ENCODE measurements at regions of chr20 and their contacts with region 1.

Region 1: GRCh38 chr20:3115190-3116107 is 30.9 kb upstream of the AVP start:
- DNase-seq: peak; percentile 63
- ATAC-seq: peak; percentile 72
- H3K4me3 Mint-ChIP-seq: no peak overlapping the region
- H3K27ac Mint-ChIP-seq: no peak overlapping the region
- H3K4me1 Mint-ChIP-seq: 0 out of 2 replicates have a peak, but pooled peaks cover 3% of the 10 kb centered on the region
- H3K27me3 Mint-ChIP-seq: no peaks in the 10 kb centered on the region
- CTCF ChIP-seq: peak; percentile 72

Region 2: DNA sequence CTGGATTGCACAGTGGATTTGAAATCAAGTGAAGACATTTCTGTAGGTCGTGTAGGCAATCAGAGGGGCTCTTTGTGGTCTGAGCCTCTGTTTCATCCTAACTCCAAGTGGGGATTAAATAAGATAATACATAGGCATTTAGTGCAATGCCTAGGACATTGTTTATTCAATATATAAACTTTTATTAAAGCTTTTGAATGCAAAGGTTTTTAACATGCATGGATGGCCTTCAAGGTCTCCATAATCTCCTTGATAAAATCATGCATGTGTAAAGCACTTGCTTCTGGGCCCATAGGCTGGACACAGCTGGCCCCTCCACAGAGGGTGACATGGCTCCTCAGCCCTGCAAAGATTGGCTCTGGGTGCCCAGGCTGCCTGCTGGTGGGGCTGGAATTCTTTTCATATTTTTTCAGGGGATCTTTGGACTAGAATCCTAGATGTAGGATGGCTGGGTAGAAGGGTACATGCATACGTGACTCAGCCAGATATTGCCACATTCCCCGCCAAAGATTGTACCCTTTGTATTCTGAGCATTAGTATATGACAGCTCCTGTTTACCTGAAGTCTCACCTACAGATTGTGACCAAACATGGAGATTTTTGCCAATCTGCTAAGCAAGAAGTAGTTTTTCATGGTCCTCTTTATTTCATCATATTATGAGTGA is 11.9 kb before region 1 on chr20:
- CTCF ChIA-PET with region 1: interaction called, 16 read pairs
- POLR2A ChIA-PET with region 1: no interaction called
- DNase-seq: no peak
- ATAC-seq: no peak
- H3K4me3 Mint-ChIP-seq: no peak overlapping the region
- H3K27ac Mint-ChIP-seq: no peak overlapping the region
- H3K4me1 Mint-ChIP-seq: peaks cover 9% of the 10 kb centered on the region; the same call in 1 of the 2 replicates
- H3K27me3 Mint-ChIP-seq: no peaks in the 10 kb centered on the region
- CTCF ChIP-seq: no peak

Region 3: DNA sequence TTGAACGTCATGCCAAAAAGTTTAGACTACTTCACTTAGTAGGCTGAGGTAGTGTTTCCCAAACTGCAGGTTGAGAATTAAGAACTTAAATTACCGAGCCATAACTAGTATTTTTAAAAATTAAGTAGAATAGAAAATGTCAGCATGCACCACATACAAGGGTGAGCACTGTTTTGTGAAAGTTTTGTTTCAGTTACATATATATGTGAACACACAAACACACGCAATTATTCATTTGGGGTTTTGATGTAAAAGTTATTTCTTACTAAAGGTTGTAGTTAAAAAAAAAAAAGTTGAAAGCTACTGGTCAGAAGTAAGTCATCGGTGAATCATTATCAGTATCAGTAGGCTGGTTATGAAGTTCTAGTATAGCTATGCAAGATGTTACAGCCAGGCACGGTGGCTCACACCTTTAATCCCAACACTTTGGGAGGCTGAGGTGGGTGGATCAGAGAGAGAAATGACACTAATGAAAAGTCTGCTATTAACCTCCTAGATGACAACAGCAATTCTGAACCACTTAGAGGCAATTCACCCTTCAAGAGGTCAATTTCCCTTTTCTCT is 20.1 kb after region 1 on chr20:
- CTCF ChIA-PET with region 1: no interaction called
- POLR2A ChIA-PET with region 1: no interaction called
- DNase-seq: no peak
- ATAC-seq: no peak
- H3K4me3 Mint-ChIP-seq: no peak overlapping the region
- H3K27ac Mint-ChIP-seq: no peak overlapping the region
- H3K4me1 Mint-ChIP-seq: no peaks in the 10 kb centered on the region
- H3K27me3 Mint-ChIP-seq: no peaks in the 10 kb centered on the region
- CTCF ChIP-seq: no peak